ENCODE measurements at regions of chr2 and their contacts with region 1.

Region 1: GRCh38 chr2:100752628-100753333 is 67.2 kb upstream of the NPAS2 start:
- DNase-seq: peak; percentile 83
- H3K4me3 Mint-ChIP-seq: no peak overlapping the region
- H3K27ac Mint-ChIP-seq: peak overlapping the region; percentile 97
- H3K4me1 Mint-ChIP-seq: peaks cover 57% of the 10 kb centered on the region
- H3K27me3 Mint-ChIP-seq: no peaks in the 10 kb centered on the region
- CTCF ChIP-seq: no peak

Region 2: DNA sequence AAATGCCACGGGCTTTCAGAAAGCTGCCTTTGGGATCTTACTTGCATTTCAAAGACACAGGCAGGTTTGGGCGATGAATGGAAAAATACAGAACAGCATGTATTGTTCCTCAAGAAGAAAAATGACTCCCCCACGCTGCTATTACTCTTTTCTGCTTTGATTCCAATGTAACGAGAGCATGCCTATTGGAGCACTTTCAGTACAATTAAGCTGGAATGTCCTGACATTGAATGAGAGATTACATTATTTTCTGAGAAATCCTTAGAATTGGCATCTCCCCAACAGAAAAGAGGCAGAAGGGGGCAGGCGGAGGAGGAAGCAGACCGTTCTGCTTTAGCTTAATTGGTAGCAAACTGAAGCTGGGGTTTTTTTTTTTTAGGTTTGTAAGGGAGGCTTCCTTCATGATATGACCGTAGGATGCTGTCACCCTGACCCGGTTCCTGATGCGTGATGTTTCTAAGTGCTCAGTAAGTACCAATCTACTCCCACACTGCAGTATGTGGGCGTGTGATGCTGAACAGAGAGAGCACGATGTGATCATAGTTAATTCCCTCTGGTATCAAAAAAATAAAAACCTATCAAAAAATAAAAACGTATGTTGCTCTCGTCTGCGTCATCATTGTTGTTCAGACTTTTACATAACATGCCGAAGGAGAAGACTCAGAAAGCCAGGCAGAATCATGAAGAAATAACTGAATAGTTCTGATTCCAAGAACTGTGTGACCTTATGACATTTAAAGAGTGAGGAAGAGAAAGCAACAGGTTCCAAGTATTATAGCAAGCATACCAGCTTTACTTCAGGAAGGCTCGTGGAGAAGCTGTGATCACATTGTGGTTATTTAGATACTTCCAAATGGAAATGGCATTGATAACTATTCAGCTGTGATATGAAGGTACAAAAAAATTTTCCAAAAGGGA is 471.0 kb before region 1 on chr2:
- CTCF ChIA-PET with region 1: no interaction called
- POLR2A ChIA-PET with region 1: no interaction called
- intact Hi-C with region 1: no loop called
- DNase-seq: no peak
- H3K4me3 Mint-ChIP-seq: no peak overlapping the region
- H3K27ac Mint-ChIP-seq: no peak overlapping the region
- H3K4me1 Mint-ChIP-seq: peaks cover 18% of the 10 kb centered on the region
- H3K27me3 Mint-ChIP-seq: peaks cover 25% of the 10 kb centered on the region
- CTCF ChIP-seq: no peak

Region 3: GRCh38 chr2:100739735-100740432 is 12.9 kb before region 1 on chr2:
- CTCF ChIA-PET with region 1: no interaction called
- POLR2A ChIA-PET with region 1: interaction called, 14 read pairs
- intact Hi-C with region 1: no loop called
- DNase-seq: peak; percentile 75
- H3K4me3 Mint-ChIP-seq: no peak overlapping the region
- H3K27ac Mint-ChIP-seq: no peak overlapping the region
- H3K4me1 Mint-ChIP-seq: peaks cover 25% of the 10 kb centered on the region
- H3K27me3 Mint-ChIP-seq: no peaks in the 10 kb centered on the region
- CTCF ChIP-seq: no peak

Region 4: GRCh38 chr2:100780203-100781008 is 27.6 kb after region 1 on chr2:
- CTCF ChIA-PET with region 1: interaction called, 4 read pairs
- POLR2A ChIA-PET with region 1: interaction called, 11 read pairs
- intact Hi-C with region 1: no loop called
- DNase-seq: peak; percentile 88
- H3K4me3 Mint-ChIP-seq: no peak overlapping the region
- H3K27ac Mint-ChIP-seq: no peak overlapping the region
- H3K4me1 Mint-ChIP-seq: peaks cover 19% of the 10 kb centered on the region
- H3K27me3 Mint-ChIP-seq: no peaks in the 10 kb centered on the region
- CTCF ChIP-seq: no peak

Region 5: DNA sequence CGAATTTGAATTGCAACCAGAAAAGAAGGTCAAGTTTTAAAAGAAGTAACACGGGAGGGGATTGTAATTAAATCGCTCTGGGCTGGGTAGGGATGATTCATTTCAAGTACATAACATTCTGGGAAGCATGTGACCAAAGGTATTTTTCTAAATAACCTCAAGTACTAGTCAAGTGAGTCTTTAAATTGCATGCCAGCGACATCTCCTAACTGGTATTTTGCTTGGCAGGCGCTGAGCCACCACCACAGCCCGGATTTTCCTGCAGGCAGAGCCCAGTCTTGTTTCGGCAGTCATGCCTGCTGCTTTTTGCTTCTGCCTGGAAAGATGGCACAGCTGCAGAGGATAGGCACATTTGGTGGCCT is 33.5 kb after region 1 on chr2:
- CTCF ChIA-PET with region 1: interaction called, 4 read pairs
- POLR2A ChIA-PET with region 1: interaction called, 10 read pairs
- intact Hi-C with region 1: loop called (anchors 2 kb)
- DNase-seq: peak; percentile 91
- H3K4me3 Mint-ChIP-seq: peak overlapping the region; percentile 56
- H3K27ac Mint-ChIP-seq: peak overlapping the region; percentile 21
- H3K4me1 Mint-ChIP-seq: peaks cover 29% of the 10 kb centered on the region
- H3K27me3 Mint-ChIP-seq: no peaks in the 10 kb centered on the region
- CTCF ChIP-seq: no peak